Esophagus muscularis mucosa (tissue), 4 donors: ENCODE measurements at regions of chr15 and their contacts with region 1.

Region 1: GRCh38 chr15:26937134-26937533 is 33.8 kb upstream of the GABRG3 start:
- DNase-seq: no peak
- H3K4me3 ChIP-seq: no peak overlapping the region
- H3K27ac ChIP-seq: no peak overlapping the region
- H3K4me1 ChIP-seq: no peaks in the 10 kb centered on the region
- H3K27me3 ChIP-seq: no peaks in the 10 kb centered on the region
- CTCF ChIP-seq: no peak
- EP300 ChIP-seq: no peak
- POLR2A ChIP-seq: no peak

Region 2: DNA sequence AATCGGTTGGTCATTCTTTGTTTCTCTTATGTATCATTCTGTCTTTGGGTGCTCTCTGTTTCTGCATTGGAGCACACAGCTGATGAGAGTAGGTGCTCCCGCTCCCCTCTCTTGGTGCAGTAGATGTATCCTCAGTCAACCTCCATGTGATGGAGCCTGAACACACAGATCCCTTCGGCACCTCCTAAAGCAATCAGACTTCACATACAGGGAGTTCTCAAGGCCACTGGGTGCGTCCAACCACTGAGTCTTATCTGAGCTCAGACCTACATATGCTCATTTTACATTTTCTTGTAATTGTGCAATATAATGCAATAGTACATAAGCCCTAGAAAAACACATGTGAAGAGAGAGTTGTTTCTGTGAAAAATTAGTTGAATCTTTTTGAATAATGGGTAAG is 875.9 kb before region 1 on chr15:
- intact Hi-C with region 1: no loop called
- DNase-seq: peak; percentile 84
- H3K4me3 ChIP-seq: no peak overlapping the region
- H3K27ac ChIP-seq: no peak overlapping the region
- H3K4me1 ChIP-seq: no peaks in the 10 kb centered on the region
- H3K27me3 ChIP-seq: no peaks in the 10 kb centered on the region
- CTCF ChIP-seq: no peak
- EP300 ChIP-seq: no peak
- POLR2A ChIP-seq: no peak

Region 3: DNA sequence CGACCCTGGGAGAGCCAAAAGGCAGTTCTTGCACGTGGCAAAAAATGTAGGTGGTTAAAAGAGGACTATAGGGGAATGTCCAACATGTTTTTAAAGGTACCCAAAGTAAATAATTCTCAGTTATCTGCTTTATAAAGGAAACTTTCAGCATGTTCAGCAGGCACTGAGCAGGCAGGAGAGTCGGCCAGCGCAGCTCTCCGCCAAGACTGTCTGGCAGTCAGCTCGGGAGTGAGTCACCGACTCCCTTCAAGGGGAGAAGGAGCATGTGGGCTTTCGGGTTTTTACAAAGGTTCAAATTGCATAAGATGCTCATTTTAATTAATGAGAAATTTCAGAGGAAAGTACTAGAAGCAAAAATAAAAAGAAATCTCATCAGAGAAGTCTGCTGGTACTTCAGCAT is 63.3 kb before region 1 on chr15:
- intact Hi-C with region 1: loop called (anchors 10 kb)
- DNase-seq: peak; percentile 91
- H3K4me3 ChIP-seq: peak overlapping the region in 1 of 4 donors; percentile 14
- H3K27ac ChIP-seq: peak overlapping the region; percentile 44 to 72 (median 70)
- H3K4me1 ChIP-seq: peaks cover 0 to 75% (median 31%) of the 10 kb centered on the region in 4 donors
- H3K27me3 ChIP-seq: peaks cover 0 to under 1% (median 0%) of the 10 kb centered on the region in 4 donors
- CTCF ChIP-seq: no peak
- EP300 ChIP-seq: no peak
- POLR2A ChIP-seq: no peak

Region 4: DNA sequence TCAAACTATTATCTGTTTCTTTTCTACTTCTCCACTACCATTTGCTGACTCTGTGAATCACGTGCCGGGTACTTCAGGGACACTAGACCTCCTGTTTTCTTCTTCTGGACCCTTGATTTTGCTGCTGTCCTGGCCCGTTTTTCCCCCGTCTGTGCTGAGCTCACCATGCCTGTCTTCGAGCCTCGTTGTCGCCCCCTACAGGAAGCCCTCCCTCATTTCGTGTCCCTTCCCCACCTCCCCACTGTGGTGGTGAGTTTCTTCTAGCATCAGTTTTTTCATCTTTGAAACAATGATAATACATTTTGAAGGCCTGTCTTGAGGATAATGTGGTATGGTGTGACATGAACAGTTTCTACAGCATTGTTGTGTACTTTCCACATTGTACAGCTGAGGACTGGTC is 46.7 kb after region 1 on chr15:
- intact Hi-C with region 1: no loop called
- DNase-seq: no peak
- H3K4me3 ChIP-seq: no peak overlapping the region
- H3K27ac ChIP-seq: no peak overlapping the region
- H3K4me1 ChIP-seq: no peaks in the 10 kb centered on the region
- H3K27me3 ChIP-seq: no peaks in the 10 kb centered on the region
- CTCF ChIP-seq: no peak
- EP300 ChIP-seq: no peak
- POLR2A ChIP-seq: no peak

Region 5: GRCh38 chr15:27046880-27047279 is 109.7 kb after region 1 on chr15:
- intact Hi-C with region 1: no loop called
- DNase-seq: no peak
- H3K4me3 ChIP-seq: no peak overlapping the region
- H3K27ac ChIP-seq: no peak overlapping the region
- H3K4me1 ChIP-seq: no peaks in the 10 kb centered on the region
- H3K27me3 ChIP-seq: no peaks in the 10 kb centered on the region
- CTCF ChIP-seq: no peak
- EP300 ChIP-seq: no peak
- POLR2A ChIP-seq: no peak

Region 6: DNA sequence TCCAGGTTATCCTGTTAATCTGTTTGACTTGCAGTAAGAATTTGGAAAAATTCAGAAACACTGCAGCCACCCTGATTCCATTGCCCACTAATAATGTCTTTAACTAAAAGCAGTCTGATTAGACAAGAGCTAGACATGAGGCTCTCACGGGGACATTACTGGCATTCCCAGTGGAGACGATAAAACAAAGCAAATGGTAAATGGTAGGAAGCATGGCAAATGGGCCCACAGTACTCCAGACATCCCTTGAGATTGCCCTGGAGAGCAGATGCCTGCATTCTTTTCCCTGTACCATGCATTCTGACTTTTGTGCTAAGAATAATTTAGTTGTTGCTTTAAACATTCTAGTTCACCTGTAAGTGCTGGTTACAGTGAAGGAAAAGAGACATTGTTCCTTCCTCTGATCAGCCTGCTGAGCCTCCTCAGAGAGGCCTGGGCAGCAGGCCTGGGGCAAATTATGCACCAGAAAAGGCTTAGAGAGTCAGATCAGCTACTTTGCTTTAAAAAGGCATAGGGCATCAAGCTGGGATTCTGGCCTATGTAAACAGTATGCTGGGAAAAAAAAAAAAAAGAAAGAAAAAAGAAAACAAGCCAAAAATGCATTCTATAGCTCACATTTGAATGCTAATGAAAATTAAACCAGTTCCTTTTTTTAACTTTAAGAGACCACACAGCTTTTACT is 238.5 kb after region 1 on chr15:
- intact Hi-C with region 1: no loop called
- DNase-seq: no peak
- H3K4me3 ChIP-seq: no peak overlapping the region
- H3K27ac ChIP-seq: no peak overlapping the region
- H3K4me1 ChIP-seq: no peaks in the 10 kb centered on the region
- H3K27me3 ChIP-seq: no peaks in the 10 kb centered on the region
- CTCF ChIP-seq: no peak
- EP300 ChIP-seq: no peak
- POLR2A ChIP-seq: no peak